PC-3 (cell line): ENCODE measurements at regions of chr11 and their contacts with region 1.

Region 1: DNA sequence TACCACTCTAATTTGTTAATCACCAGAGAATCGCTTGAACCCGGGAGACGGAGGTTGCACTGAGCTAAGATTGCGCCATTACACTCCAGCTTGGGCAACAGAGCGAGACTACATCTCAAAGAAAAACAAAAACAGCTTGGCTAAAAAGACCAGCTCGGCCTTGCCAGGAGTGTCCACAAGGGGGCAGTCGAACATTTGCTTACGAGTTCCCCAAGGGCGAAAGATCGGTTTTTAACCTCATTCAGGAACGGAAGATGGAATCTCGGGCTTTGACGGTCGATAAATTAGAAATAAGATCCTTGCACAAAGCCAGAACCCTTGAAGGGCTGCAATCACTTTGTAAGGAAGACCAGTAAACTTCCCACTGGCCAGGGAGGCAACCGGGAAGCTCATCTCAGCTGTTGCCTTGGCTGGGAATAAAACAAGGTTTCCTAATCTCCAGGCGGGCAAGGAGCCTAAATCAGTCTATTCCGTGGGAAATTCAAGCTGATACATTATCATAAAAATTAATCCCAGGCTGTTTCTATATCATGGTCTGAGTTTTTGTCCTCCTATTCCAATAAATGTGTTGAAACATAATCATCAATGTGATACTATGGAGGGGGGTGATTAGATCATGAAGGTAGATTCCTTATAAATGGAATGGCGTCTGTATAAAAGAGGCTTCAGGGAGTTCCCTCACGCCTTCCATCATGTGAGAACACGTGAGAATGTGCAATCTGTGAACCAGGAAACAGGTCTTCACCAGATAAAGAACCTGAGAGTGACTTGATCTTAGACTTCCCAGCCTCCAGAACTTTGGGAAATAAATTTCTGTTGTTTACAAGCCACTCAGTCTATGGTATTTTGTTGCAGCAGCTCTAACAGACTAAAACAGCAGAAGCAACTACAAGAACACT is 14.9 kb upstream of the SLC29A2 start:
- DNase-seq: peak; percentile 95
- ATAC-seq: peak; percentile 77
- H3K4me3 ChIP-seq: peak overlapping the region; percentile 58
- H3K27ac ChIP-seq: no peak overlapping the region
- H3K4me1 ChIP-seq: 0 out of 2 replicates have a peak, but pooled peaks cover 3% of the 10 kb centered on the region
- H3K27me3 ChIP-seq: no peaks in the 10 kb centered on the region
- CTCF ChIP-seq: peak; percentile 98

Region 2: DNA sequence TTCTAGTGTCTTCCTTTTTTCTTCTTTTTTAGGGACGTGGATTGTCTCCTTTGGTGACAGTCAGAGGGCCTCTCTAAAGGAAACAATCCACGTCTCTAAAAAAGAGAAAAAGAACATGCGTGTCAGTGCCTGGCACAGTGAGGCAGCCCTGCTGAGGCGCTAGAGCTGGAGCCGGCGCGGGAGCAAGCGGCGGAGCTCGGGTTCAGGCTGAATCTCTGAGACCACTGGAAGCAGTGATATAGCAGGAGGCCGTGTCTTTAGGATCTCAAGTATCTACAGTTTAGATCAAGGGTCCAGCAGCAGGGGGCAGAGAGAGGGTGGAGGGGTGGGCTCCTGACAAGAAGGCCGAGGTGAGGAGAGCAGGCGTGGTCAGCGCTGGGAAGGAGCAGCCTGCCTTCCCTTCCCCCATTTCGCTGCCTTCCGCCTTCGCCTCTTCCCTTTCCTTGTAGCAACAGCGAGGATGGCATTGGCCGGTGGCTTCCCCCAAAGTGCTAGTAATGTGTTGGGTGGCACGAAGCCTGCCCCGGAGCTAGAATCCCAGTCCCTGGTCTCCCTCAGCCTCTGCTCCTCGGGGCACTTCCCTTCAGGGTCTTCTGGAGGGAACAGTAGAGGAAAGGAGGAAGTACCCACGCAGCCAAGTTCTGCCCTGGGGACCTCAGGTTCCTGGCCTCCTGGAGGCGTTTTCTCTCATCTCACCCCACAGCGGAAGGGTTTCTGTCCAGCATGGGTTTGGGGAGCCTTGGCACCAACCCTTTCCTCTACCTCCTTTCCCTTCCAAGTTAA is 146.2 kb before region 1 on chr11:
- CTCF ChIA-PET with region 1: no interaction called
- POLR2A ChIA-PET with region 1: no interaction called
- intact Hi-C with region 1: no loop called
- DNase-seq: no peak
- ATAC-seq: no peak
- H3K4me3 ChIP-seq: no peak overlapping the region
- H3K27ac ChIP-seq: no peak overlapping the region
- H3K4me1 ChIP-seq: no peaks in the 10 kb centered on the region
- H3K27me3 ChIP-seq: no peaks in the 10 kb centered on the region
- CTCF ChIP-seq: no peak

Region 3: GRCh38 chr11:66328307-66329144 is 57.9 kb before region 1 on chr11:
- CTCF ChIA-PET with region 1: interaction called, 3 read pairs
- POLR2A ChIA-PET with region 1: no interaction called
- intact Hi-C with region 1: loop called (anchors 1 kb)
- DNase-seq: peak; percentile 88
- ATAC-seq: peak; percentile 81
- H3K4me3 ChIP-seq: no peak overlapping the region
- H3K27ac ChIP-seq: no peak overlapping the region
- H3K4me1 ChIP-seq: peaks cover 23% of the 10 kb centered on the region
- H3K27me3 ChIP-seq: no peaks in the 10 kb centered on the region
- CTCF ChIP-seq: peak; percentile 97

Region 4: DNA sequence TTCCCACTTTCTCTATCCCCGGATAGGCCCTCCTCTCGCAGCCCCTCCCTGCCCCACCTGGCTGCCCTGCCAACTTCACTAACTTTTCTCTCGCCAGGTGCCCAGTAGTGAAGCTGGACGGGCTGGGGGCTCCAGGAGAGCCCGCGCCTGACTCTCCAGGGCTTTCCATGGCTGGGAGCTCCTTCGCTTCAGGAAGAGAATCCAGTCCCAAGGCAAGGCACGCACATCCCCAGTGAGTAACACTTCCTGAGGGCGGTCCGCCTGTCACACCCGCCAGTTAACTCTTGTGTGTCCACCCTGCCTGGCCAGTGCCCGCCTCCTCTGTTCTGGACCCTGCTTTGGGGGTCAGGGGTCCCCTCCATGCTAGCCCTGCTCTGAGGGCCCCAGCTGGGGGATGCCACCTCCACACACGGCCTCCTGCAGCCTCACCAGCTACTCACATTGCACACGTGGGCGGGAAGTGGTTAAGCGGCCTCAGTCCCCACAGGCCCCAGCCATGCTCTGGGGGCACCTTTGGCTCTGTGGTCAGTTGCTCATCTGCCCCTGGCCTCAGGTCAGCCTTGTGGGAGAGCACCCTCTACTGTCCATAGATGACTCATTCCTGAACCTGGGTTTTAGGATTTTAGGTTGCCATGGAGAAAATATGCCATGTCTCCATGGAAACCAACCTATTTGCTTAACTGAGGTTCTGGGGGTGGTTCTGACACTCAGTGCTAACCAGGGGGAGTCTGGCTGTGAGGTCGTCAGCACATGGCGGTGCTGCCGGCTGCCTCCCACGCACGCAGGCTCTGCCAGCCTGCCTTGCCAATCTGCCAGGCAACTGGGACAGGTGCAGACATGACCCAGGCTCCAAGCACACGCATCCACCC is 50.0 kb before region 1 on chr11 and contains the start of gene RIN1:
- CTCF ChIA-PET with region 1: interaction called, 11 read pairs
- POLR2A ChIA-PET with region 1: no interaction called
- intact Hi-C with region 1: no loop called
- DNase-seq: peak; percentile 95
- ATAC-seq: peak; percentile 80
- H3K4me3 ChIP-seq: peak within 1 kb of the TSS; percentile 81
- H3K27ac ChIP-seq: peak within 1 kb of the TSS; percentile 96
- H3K4me1 ChIP-seq: peaks cover 31% of the 10 kb centered on the region
- H3K27me3 ChIP-seq: no peaks in the 10 kb centered on the region
- CTCF ChIP-seq: peak; percentile 44
- total RNA-seq, gene RIN1: 41.2 and 71.8 TPM in 2 replicates

Region 5: DNA sequence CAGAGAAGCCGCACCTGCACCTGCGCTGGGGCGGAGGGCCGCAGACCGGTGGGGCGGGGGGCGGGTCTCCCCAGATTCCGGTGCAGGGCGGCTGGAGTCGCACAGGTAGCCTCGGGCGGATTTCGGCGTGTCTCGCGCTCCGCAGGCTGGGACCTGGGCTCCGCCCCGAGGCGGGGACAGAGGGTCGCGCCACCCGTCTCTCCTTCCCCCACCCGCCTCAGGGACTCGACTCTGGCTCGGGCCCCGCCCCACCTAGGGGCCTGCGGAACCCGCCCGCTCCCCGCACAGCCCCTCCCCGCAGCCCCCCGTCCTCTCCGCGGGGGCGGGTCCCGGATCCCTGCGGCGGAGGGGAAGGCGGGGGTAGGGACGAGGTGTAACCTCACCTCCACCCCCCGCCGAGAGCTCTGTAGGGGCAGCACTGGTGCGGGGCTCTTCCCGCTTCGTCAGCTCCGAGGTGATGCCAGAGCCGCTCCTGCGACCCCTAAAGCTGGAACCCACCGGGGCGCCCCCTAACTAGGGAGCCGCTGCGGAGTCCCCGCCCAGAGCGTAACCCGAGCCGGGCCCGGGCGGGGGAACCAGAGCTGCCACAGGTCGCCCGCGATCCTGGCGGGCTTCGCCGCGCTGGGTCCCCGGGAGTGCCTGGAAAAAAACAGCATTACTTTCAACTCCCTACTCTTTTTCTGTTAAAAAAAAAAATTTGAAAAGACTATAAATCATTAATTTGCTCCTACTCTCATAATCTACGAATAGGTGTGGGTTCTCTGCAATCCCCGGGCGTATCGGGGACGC is 14.6 kb before region 1 on chr11 and contains the start of gene SLC29A2:
- CTCF ChIA-PET with region 1: interaction called, 6 read pairs
- POLR2A ChIA-PET with region 1: no interaction called
- intact Hi-C with region 1: loop called (anchors 2 kb)
- DNase-seq: peak; percentile 96
- ATAC-seq: peak; percentile 79
- H3K4me3 ChIP-seq: peak within 1 kb of the TSS; percentile 89
- H3K27ac ChIP-seq: peak within 1 kb of the TSS; percentile 63
- H3K4me1 ChIP-seq: peaks cover 25% of the 10 kb centered on the region
- H3K27me3 ChIP-seq: no peaks in the 10 kb centered on the region
- CTCF ChIP-seq: no peak
- total RNA-seq, gene SLC29A2: 25.5 and 27.8 TPM in 2 replicates